Right ventricle myocardium inferior (tissue), 1 donor: ENCODE measurements at regions of chr1 and their contacts with region 1.

Region 1: GRCh38 chr1:1273512-1274298 is at the start of gene UBE2J2:
- DNase-seq: peak; percentile 97
- ATAC-seq: peak; percentile 98
- total RNA-seq, gene UBE2J2: 40.0 TPM

Region 2: GRCh38 chr1:1231400-1232223 is 42.1 kb before region 1 on chr1 and contains the start of gene SDF4:
- intact Hi-C with region 1: loop called (anchors 2 kb)
- DNase-seq: peak; percentile 99
- ATAC-seq: peak; percentile 98
- total RNA-seq, gene SDF4: 125 TPM

Region 3: GRCh38 chr1:1324521-1325287 is 51.0 kb after region 1 on chr1 and contains the starts of genes CPTP and INTS11:
- intact Hi-C with region 1: no loop called
- DNase-seq: peak; percentile 96
- ATAC-seq: peak; percentile 81
- total RNA-seq, gene CPTP: 119 TPM
- total RNA-seq, gene INTS11: 75.7 TPM